AG04449 (cell line): ENCODE measurements at regions of chr22 and their contacts with region 1.

Region 1: DNA sequence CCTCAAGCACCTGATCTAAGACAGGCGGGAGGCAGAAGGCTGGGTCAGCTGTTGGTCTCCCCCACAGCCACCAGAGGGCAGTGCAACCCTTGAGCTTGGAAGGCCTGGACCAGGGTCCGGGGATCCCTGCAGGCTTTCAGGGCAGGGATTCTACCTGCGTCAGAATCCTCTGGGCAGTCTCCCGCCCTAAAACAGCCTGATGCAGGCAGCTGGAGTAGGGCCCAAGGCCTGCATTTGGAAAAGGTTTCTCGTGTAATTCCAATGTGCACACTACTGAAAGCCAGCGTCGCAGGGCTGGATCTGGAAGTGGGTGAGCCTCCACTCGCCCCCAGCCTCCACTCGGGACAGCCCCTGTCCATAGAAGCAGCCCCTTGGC is 31.8 kb downstream of the BID start:
- DNase-seq: no peak
- H3K4me3 ChIP-seq: no peak overlapping the region
- CTCF ChIP-seq: peak; percentile 93

Region 2: GRCh38 chr22:17552737-17553136 is 189.8 kb before region 1 on chr22:
- CTCF ChIA-PET with region 1: interaction called, 56 read pairs
- POLR2A ChIA-PET with region 1: no interaction called
- DNase-seq: no peak
- H3K4me3 ChIP-seq: no peak overlapping the region
- CTCF ChIP-seq: no peak

Region 3: GRCh38 chr22:17606496-17606895 is 136.0 kb before region 1 on chr22:
- CTCF ChIA-PET with region 1: no interaction called
- POLR2A ChIA-PET with region 1: no interaction called
- DNase-seq: peak; percentile 36
- H3K4me3 ChIP-seq: no peak overlapping the region
- CTCF ChIP-seq: no peak

Region 4: DNA sequence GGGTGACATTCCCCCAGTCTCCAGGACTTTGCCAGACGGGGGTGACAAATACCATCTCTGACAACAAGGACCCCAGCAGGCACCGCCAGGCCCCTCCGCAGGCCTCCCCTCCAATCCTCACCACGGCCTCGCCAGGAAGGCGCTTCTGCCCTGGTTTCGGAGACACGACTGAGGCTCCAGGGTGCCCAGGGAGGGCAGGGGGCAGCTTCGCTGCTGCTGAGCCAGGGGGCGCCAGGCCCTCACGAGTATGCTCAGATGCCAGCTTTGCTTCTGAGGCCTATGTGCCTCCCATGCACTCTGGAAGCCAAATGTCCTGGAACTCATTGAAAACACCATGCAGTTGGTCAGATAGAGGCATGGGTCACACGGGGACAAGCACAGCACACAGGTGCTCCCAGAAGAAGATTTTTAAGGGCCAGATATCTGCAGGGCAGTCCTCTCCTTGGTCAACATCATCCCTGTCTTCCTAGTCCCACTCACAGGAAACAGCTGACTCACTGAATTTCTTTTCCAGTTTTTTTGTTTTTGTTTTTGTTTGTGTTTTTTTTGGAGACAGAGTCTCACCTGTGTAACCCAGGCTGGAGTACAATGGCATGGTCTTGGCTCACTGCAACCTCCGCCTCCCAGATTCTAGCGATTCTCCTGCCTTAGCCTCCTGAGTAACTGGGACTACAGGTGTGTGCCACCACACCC is 11.9 kb after region 1 on chr22:
- CTCF ChIA-PET with region 1: interaction called, 36 read pairs
- POLR2A ChIA-PET with region 1: no interaction called
- DNase-seq: no peak
- H3K4me3 ChIP-seq: no peak overlapping the region
- CTCF ChIP-seq: peak; percentile 32

Region 5: DNA sequence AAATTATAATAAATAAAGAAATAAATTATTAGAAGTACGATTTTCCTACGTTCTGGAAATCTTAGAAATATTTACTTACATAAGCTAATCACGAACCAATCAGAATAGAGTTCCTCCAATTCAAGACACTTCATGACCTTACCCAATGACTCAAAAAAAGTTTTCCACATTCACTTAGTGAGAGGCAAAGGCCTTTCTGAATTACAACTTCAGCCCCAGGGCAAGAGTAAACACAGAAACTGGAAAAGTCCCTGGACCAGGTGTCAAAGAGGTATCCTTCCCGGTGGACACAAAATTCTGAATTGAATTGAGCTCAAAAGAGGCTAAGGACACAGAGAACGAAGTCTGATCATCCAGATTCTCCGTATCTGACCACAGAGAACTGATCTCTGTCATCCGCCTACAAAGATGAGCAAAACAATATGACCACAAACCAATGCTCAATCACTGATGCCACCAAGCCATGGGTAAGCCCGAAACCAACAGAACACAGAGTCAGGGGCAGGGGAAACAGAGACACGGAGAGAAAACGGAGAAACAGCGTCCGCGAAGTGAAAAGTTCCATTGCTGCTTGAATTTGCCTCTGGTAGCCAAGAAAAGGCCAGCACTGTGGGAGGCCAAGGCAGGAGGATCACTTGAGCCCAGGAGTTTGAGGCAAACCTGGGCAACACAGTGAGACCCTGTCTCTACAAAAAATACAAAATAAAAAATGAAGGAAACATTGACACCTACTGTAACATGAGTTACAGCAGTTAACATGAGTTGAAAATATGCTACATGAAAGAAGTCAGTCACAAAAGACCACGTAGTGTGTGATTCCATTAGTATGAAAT is 24.9 kb after region 1 on chr22:
- CTCF ChIA-PET with region 1: interaction called, 49 read pairs
- POLR2A ChIA-PET with region 1: no interaction called
- DNase-seq: no peak
- H3K4me3 ChIP-seq: no peak overlapping the region
- CTCF ChIP-seq: no peak

Region 6: DNA sequence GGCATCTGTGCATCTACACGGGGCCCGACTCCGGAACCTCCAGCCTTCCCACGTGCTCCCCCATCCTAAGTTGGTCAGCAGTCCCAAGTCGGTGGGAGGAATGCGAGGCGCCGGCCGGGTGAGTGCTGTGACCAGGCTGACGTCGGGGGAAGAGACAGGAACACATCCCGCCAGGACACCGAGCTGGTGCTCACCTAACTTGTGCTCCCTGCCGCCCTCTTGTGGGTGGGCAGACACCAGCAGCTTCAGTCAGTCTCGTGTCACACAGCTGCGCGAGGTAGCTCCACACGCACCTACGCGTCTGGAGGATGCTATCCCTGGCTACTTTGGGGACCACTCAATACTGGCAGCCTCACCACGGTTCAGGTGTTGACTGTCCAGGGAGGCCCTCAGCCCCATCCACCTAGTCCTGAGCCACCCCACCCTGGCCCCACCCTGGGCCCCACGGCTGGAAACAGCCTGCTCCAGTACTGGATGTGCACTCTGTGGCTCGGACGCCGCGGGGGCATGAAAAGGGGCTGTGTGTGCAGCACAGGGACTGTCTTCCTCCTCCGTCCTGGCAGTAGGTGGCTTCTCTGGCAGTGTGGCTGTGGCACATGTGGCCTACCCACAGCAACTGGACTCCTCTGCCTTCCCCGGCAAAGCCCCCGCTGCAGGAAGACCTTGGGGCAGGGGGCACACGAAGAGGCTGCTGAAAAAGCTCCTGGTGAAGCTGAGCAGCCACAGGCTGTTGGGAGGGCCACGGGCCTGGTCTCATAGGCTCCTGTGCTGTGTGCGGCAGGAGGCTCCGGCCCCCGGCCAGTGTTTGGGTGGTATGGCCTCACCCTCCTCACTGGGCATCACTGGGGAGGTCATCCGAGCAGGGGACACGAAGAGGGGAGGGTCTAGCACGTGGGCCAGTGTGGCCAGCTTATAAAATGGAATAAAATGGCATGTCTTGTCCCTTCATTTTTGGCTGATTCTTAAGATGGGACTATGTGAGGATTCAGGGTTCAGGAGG is 43.0 kb after region 1 on chr22:
- CTCF ChIA-PET with region 1: interaction called, 90 read pairs
- POLR2A ChIA-PET with region 1: no interaction called
- DNase-seq: no peak
- H3K4me3 ChIP-seq: no peak overlapping the region
- CTCF ChIP-seq: peak; percentile 60

Region 7: DNA sequence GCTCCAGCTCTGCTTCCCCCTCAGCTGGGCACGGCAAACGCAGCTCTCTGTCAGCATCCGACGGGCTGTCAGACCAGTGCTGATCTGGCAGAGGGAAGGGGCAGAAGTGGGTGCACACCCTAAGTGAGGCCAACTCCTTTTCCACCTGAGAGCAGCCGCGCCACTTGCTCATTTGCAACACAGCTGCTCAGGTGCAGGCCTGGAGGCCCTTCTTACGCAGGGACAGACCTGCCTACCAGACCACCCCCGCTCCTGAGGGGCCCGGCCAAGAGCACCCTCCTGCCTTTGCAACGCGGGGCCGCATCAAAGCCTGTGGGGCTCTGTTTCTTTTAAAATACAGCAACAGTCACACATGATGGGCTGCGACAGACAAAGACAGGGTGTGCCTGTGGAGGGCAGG is 79.6 kb after region 1 on chr22:
- CTCF ChIA-PET with region 1: no interaction called
- POLR2A ChIA-PET with region 1: no interaction called
- DNase-seq: no peak
- H3K4me3 ChIP-seq: no peak overlapping the region
- CTCF ChIP-seq: no peak